ENCODE measurements at regions of chr9 and their contacts with region 1.

Region 1: GRCh38 chr9:98974994-98975712 is 31.4 kb downstream of the COL15A1 start:
- DNase-seq: no peak
- H3K4me3 ChIP-seq: peak overlapping the region; percentile 2 to 41
- H3K27ac ChIP-seq: peak overlapping the region; percentile 57
- H3K4me1 ChIP-seq: peaks cover 40% of the 10 kb centered on the region
- H3K27me3 ChIP-seq: no peaks in the 10 kb centered on the region
- CTCF ChIP-seq: peak; percentile 82 to 95 (median 86)
- POLR2A ChIP-seq: no peak

Region 2: DNA sequence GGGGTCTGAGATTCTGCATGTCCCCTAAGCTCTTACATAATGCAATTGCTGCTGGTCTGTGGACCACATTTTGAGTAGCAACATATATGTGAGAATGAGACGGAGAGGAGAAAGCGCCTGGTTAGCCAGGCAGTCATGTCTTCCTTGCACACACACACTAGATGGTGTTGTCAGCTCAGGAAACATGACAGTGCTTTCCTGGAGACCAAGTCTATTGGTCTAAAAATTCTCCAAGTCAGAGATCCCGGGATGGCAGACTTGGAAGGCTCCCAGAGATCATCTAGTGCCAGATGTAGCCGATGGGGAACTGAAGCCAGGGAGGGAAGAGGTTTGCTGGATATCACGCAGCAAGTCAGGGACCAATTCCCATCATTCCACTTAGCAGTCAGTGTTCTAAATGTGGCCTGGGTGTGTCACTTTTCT is 114.3 kb before region 1 on chr9:
- intact Hi-C with region 1: loop called (anchors 5 kb)
- DNase-seq: no peak
- H3K4me3 ChIP-seq: no peak overlapping the region
- H3K27ac ChIP-seq: peak overlapping the region; percentile 64
- H3K4me1 ChIP-seq: peaks cover 40% of the 10 kb centered on the region
- H3K27me3 ChIP-seq: no peaks in the 10 kb centered on the region
- CTCF ChIP-seq: peak; percentile 38 to 44 (median 42)
- POLR2A ChIP-seq: no peak

Region 3: GRCh38 chr9:98998441-98999151 is 23.4 kb after region 1 on chr9:
- intact Hi-C with region 1: loop called (anchors 2 kb)
- DNase-seq: peak; percentile 34 to 88
- H3K4me3 ChIP-seq: peak overlapping the region in 1 of 2 donors; percentile 13
- H3K27ac ChIP-seq: peak overlapping the region; percentile 70
- H3K4me1 ChIP-seq: peaks cover 40% of the 10 kb centered on the region
- H3K27me3 ChIP-seq: no peaks in the 10 kb centered on the region
- CTCF ChIP-seq: peak; percentile 63 to 92 (median 91)
- POLR2A ChIP-seq: no peak